Activated CD4-positive, alpha-beta T cell treated with anti-CD3 and anti-CD28 coated beads, Interleukin-2, amount 10 ng/mL, durations not matched to agents 7 days and 5 days (primary cell): ENCODE measurements at regions of chr17 and their contacts with region 1.

Region 1: GRCh38 chr17:1136748-1137147 is 43.0 kb downstream of the ABR start:
- DNase-seq: no peak
- H3K4me3 Mint-ChIP-seq: no peak overlapping the region
- H3K27ac Mint-ChIP-seq: no peak overlapping the region
- H3K4me1 Mint-ChIP-seq: no peaks in the 10 kb centered on the region
- H3K27me3 Mint-ChIP-seq: peaks cover 2% of the 10 kb centered on the region

Region 2: DNA sequence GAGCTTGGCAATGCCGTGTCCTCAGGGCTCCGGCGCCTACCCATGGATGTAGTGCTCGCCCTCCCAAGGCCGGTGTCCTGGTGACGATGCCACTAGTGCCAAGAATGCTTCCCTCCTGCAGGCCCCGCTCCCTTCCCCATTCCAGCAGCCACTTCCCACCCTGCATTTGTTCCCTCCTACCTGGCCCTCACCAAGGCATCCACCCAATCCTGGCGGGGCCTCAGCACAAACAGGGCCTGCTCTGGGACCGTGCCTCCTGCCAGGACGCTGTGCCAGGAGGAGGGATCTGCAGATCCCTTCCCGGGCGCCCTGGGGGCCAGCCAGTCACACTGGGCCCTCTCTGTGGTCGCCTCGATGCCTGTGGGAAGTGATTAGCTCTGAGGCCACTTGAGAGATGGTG is 18.0 kb after region 1 on chr17:
- CTCF ChIA-PET with region 1: no interaction called
- POLR2A ChIA-PET with region 1: no interaction called
- DNase-seq: no peak
- H3K4me3 Mint-ChIP-seq: no peak overlapping the region
- H3K27ac Mint-ChIP-seq: no peak overlapping the region
- H3K4me1 Mint-ChIP-seq: no peaks in the 10 kb centered on the region
- H3K27me3 Mint-ChIP-seq: no peaks in the 10 kb centered on the region

Region 3: DNA sequence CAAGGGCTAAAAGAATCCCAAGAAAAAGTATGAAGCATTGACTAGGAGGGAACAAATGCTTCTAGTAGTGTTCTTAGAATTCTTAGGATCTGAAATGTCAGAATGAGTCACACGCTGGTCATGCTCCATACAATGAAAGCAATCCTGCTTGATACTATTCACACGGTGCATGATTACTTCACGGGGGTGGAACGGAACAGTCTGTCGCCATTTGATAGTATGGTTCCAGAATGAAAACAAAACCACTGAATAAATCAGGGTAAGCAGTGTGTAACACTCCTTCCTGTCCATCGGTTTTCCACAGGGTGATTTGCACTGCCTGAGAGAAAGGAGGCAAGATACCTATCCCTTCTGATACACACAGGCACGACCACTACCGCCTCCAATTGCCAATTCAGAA is 286.2 kb after region 1 on chr17:
- CTCF ChIA-PET with region 1: no interaction called
- POLR2A ChIA-PET with region 1: interaction called, 10 read pairs
- DNase-seq: no peak
- H3K4me3 Mint-ChIP-seq: no peak overlapping the region
- H3K27ac Mint-ChIP-seq: no peak overlapping the region
- H3K4me1 Mint-ChIP-seq: peaks cover 3% of the 10 kb centered on the region
- H3K27me3 Mint-ChIP-seq: no peaks in the 10 kb centered on the region